ENCODE measurements at regions of chr10 and their contacts with region 1.

Region 1: GRCh38 chr10:116683821-116684220 is 58.5 kb downstream of the HSPA12A start:
- DNase-seq: no peak
- H3K4me3 ChIP-seq: no peak overlapping the region
- H3K27ac ChIP-seq: no peak overlapping the region
- H3K4me1 ChIP-seq: peaks cover 5 to 6% of the 10 kb centered on the region in 2 experiments; a peak in 1 of 4 replicates
- H3K27me3 ChIP-seq: no peaks in the 10 kb centered on the region
- CTCF ChIP-seq: no peak
- EP300 ChIP-seq: no peak
- RAD21 ChIP-seq: no peak

Region 2: GRCh38 chr10:115328331-115328730 is 1355.5 kb before region 1 on chr10:
- CTCF ChIA-PET with region 1: no interaction called
- POLR2A ChIA-PET with region 1: no interaction called
- DNase-seq: no peak
- H3K4me3 ChIP-seq: no peak overlapping the region
- H3K27ac ChIP-seq: no peak overlapping the region
- H3K4me1 ChIP-seq: no peaks in the 10 kb centered on the region
- H3K27me3 ChIP-seq: no peaks in the 10 kb centered on the region
- CTCF ChIP-seq: no peak
- EP300 ChIP-seq: no peak
- RAD21 ChIP-seq: no peak

Region 3: GRCh38 chr10:116457488-116457887 is 226.3 kb before region 1 on chr10:
- CTCF ChIA-PET with region 1: no interaction called
- POLR2A ChIA-PET with region 1: no interaction called
- DNase-seq: no peak
- H3K4me3 ChIP-seq: no peak overlapping the region
- H3K27ac ChIP-seq: no peak overlapping the region
- H3K4me1 ChIP-seq: no peaks in the 10 kb centered on the region
- H3K27me3 ChIP-seq: no peaks in the 10 kb centered on the region
- CTCF ChIP-seq: no peak
- EP300 ChIP-seq: no peak
- RAD21 ChIP-seq: no peak

Region 4: DNA sequence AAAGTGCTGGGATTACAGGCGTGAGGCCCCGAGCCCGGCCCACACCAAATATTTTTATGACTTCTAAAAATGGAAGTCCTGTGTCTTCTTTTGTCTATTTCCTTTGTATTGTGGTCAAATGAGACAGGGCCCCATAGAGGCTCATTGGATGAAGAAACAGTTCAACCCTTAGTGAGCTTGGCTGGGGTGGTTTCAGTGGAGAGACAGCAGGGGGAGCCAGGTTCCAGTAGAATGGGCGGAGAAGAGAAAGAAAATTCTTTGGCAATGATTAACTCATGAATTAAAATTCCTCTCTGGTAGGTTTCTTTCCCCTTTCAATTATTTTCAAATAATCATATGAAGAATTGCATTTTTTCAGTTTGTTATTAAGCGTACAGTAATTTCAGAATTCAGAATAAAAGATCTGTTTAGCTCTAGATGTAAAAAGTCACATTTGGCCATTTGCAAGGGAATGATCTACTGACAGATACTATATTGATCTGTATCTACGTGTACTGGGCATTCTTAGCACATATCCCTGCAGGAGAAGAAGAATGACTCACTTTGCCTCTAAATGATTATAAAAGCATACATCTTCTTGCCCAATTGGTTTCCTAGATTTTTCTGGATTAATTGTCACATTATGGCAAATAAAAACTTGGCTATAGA is 212.9 kb before region 1 on chr10:
- CTCF ChIA-PET with region 1: no interaction called
- POLR2A ChIA-PET with region 1: no interaction called
- DNase-seq: peak; percentile 30
- H3K4me3 ChIP-seq: no peak overlapping the region
- H3K27ac ChIP-seq: no peak overlapping the region
- H3K4me1 ChIP-seq: no peaks in the 10 kb centered on the region
- H3K27me3 ChIP-seq: no peaks in the 10 kb centered on the region
- CTCF ChIP-seq: peak; percentile 69
- EP300 ChIP-seq: no peak
- RAD21 ChIP-seq: peak; percentile 39; the same call in 1 of the 2 replicates

Region 5: DNA sequence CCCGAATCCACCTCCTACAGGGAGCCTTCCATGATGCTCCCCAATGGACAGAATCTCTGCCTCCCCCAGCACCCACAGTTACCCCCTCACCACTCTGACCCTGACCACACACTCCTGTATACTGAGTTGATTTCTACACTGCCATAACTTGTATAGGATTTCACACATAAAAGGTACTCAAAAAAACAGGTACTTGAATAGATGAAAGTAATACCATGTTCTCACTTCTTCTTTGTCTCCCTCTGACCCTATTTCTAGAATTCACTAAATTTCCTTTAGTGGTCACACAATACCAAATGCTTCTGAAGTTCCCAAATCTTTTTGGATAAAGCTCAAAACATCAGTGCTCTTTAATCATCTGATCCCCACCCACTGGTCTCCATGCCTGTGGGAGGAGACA is 13.1 kb after region 1 on chr10:
- CTCF ChIA-PET with region 1: interaction called, 15 read pairs
- POLR2A ChIA-PET with region 1: no interaction called
- DNase-seq: no peak
- H3K4me3 ChIP-seq: no peak overlapping the region
- H3K27ac ChIP-seq: no peak overlapping the region
- H3K4me1 ChIP-seq: peaks cover 0 to 16% of the 10 kb centered on the region in 2 experiments; a peak in 1 of 4 replicates
- H3K27me3 ChIP-seq: no peaks in the 10 kb centered on the region
- CTCF ChIP-seq: no peak
- EP300 ChIP-seq: no peak
- RAD21 ChIP-seq: no peak

Region 6: GRCh38 chr10:116771101-116771958 is 87.5 kb after region 1 on chr10:
- CTCF ChIA-PET with region 1: interaction called, 14 read pairs
- POLR2A ChIA-PET with region 1: no interaction called
- DNase-seq: no peak
- H3K4me3 ChIP-seq: no peak overlapping the region
- H3K27ac ChIP-seq: peak overlapping the region in 1 of 2 experiments; percentile 47; a peak in 2 of 4 replicates
- H3K4me1 ChIP-seq: peaks cover 0 to 12% of the 10 kb centered on the region in 2 experiments; a peak in 1 of 4 replicates
- H3K27me3 ChIP-seq: no peaks in the 10 kb centered on the region
- CTCF ChIP-seq: no peak
- EP300 ChIP-seq: peak in 1 of 2 experiments; percentile 41; a peak in 1 of 4 replicates
- RAD21 ChIP-seq: no peak

Region 7: GRCh38 chr10:116796910-116797513 is 113.2 kb after region 1 on chr10:
- CTCF ChIA-PET with region 1: interaction called, 218 read pairs
- POLR2A ChIA-PET with region 1: no interaction called
- DNase-seq: peak; percentile 87
- H3K4me3 ChIP-seq: no peak overlapping the region
- H3K27ac ChIP-seq: no peak overlapping the region
- H3K4me1 ChIP-seq: no peaks in the 10 kb centered on the region
- H3K27me3 ChIP-seq: no peaks in the 10 kb centered on the region
- CTCF ChIP-seq: peak; percentile 97
- EP300 ChIP-seq: no peak
- RAD21 ChIP-seq: peak; percentile 97